ENCODE measurements at regions of chr2 and their contacts with region 1.

Region 1: GRCh38 chr2:24111407-24111901 is 11.7 kb downstream of the PFN4 start:
- DNase-seq: no peak
- CTCF ChIP-seq: no peak

Region 2: GRCh38 chr2:24123195-24123921 is 11.9 kb after region 1 on chr2 and contains the starts of genes FAM228B and PFN4:
- CTCF ChIA-PET with region 1: interaction called, 13 read pairs
- POLR2A ChIA-PET with region 1: no interaction called
- DNase-seq: peak; percentile 95
- CTCF ChIP-seq: no peak

Region 3: DNA sequence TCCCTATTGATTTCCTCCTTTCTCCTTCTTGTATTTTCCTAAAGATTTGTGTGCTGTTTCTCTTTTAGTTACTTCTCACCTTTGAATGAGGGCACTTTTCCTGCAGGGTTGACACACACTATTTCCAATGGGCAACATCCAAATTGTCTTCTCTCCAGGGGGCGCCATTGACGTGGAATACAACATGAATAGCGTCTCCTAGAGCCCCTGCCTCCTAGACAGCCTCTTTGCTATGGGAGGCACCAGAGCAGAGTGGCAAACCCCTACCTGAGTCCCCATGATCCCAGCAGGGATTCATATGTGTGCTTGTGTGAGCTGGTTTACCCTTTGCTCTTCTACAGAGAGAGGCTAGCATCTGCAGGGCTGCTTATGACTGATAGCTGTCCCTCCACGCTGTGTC is 310.2 kb after region 1 on chr2:
- CTCF ChIA-PET with region 1: no interaction called
- POLR2A ChIA-PET with region 1: no interaction called
- DNase-seq: peak; percentile 52
- CTCF ChIP-seq: peak; percentile 48